ENCODE measurements at regions of chr14 and their contacts with region 1.

Region 1: GRCh38 chr14:102316743-102317563 is 2.6 kb upstream of the ZNF839 start:
- DNase-seq: peak; percentile 92
- ATAC-seq: peak; percentile 66
- H3K4me3 Mint-ChIP-seq: peak overlapping the region; percentile 93
- H3K27ac Mint-ChIP-seq: peak overlapping the region; percentile 98
- H3K4me1 Mint-ChIP-seq: peaks cover 49% of the 10 kb centered on the region
- H3K27me3 Mint-ChIP-seq: peaks cover 25% of the 10 kb centered on the region
- CTCF ChIP-seq: no peak

Region 2: DNA sequence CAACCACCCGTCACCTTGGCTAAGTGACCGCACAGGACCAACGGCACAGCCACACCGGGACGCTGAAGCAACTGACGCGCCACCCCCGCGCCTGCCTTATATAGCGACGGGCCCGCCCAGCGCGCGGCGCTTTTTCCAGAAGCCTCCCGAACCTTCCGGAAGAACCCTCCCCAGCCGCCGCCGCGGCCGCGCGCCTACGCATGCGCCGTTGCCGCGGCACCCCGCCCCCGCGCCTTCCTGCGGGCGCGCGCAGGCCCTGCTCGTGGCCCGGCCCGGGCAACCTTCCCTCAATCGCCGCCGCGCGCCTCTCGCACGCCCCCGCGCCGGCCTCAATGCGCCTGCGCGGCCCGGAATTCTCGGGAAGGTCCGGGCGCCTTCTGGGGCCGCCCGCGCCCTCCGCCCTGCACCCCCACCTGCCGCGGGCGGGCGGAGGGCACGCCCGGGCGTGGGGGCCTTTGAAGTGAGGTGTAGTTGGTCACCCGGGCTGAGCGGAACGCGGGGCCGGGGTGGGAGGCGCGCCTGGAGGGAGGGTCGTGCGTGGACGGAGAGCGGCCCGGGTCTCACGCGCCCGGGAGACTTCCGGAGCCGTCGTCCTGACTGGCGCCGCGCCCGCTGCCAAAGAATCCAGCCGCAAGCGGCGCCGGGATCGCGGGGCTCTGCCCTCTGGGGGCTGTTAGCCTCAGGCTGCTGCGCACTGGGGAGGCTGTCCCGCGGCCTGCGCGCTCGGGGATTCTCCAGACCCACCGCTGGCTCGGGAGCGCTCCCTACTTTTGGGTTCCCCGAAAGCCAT is 229.8 kb before region 1 on chr14 and contains the start of gene HSP90AA1:
- CTCF ChIA-PET with region 1: interaction called, 10 read pairs
- POLR2A ChIA-PET with region 1: interaction called, 13 read pairs
- DNase-seq: peak; percentile 94
- ATAC-seq: peak; percentile 76
- H3K4me3 Mint-ChIP-seq: peak within 1 kb of the TSS; percentile 97
- H3K27ac Mint-ChIP-seq: peak within 1 kb of the TSS; percentile 96
- H3K4me1 Mint-ChIP-seq: peaks cover 53% of the 10 kb centered on the region
- H3K27me3 Mint-ChIP-seq: no peaks in the 10 kb centered on the region
- CTCF ChIP-seq: no peak
- total RNA-seq, gene HSP90AA1: 808 to 842 TPM (median 832 TPM) in 3 replicates

Region 3: DNA sequence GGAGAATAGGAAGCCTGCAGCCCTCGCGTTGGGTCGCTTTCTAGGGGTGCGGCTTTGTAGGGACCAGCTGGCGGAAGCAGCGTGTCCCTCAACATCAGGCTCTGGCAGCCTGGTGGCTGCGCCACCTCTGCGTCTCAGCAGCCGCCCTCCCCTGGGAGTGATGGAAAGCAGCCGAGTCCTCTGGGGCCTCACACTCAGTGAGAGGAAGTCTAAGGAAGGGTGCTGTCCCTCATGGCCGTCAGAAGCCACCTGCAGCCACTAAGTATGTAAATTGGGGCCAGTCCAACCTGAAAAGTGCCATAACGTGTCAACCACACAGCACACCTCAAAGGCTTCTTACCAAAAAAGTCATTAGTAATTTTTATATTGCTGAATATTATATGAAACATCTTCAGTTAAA is 96.9 kb before region 1 on chr14:
- CTCF ChIA-PET with region 1: interaction called, 14 read pairs
- POLR2A ChIA-PET with region 1: interaction called, 3 read pairs
- DNase-seq: no peak
- ATAC-seq: no peak
- H3K4me3 Mint-ChIP-seq: no peak overlapping the region
- H3K27ac Mint-ChIP-seq: peak overlapping the region; percentile 49; the same call in 1 of the 2 replicates
- H3K4me1 Mint-ChIP-seq: peaks cover 28% of the 10 kb centered on the region
- H3K27me3 Mint-ChIP-seq: no peaks in the 10 kb centered on the region
- CTCF ChIP-seq: no peak

Region 4: GRCh38 chr14:102295270-102295669 is 21.7 kb before region 1 on chr14:
- CTCF ChIA-PET with region 1: interaction called, 22 read pairs
- POLR2A ChIA-PET with region 1: no interaction called
- DNase-seq: no peak
- ATAC-seq: peak; percentile 46; the same call in 1 of the 2 replicates
- H3K4me3 Mint-ChIP-seq: no peak overlapping the region
- H3K27ac Mint-ChIP-seq: no peak overlapping the region
- H3K4me1 Mint-ChIP-seq: no peaks in the 10 kb centered on the region
- H3K27me3 Mint-ChIP-seq: no peaks in the 10 kb centered on the region
- CTCF ChIP-seq: no peak

Region 5: DNA sequence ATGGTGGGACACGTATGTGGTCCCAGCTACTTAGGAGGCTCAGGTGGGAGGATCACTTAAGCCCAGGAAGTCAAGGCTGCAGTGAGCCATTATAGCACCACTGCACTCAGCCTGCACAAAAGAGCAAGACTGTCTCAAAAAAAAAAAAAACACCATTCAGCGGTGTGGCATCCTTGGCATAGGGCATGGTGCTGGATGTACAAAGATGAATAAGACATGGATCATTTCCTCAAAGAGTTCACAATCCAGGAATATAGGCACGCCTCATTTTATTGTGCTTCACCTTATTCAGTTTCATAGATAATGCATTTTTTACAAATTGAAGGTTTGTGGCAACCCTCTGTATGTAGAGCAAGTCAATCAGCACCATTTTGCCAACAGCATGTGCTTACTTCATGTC is 39.3 kb after region 1 on chr14:
- CTCF ChIA-PET with region 1: no interaction called
- POLR2A ChIA-PET with region 1: no interaction called
- DNase-seq: no peak
- ATAC-seq: no peak
- H3K4me3 Mint-ChIP-seq: no peak overlapping the region
- H3K27ac Mint-ChIP-seq: no peak overlapping the region
- H3K4me1 Mint-ChIP-seq: 0 out of 2 replicates have a peak, but pooled peaks cover 4% of the 10 kb centered on the region
- H3K27me3 Mint-ChIP-seq: no peaks in the 10 kb centered on the region
- CTCF ChIP-seq: no peak